B cell (primary cell): ENCODE measurements at regions of chr2 and their contacts with region 1.

Region 1: DNA sequence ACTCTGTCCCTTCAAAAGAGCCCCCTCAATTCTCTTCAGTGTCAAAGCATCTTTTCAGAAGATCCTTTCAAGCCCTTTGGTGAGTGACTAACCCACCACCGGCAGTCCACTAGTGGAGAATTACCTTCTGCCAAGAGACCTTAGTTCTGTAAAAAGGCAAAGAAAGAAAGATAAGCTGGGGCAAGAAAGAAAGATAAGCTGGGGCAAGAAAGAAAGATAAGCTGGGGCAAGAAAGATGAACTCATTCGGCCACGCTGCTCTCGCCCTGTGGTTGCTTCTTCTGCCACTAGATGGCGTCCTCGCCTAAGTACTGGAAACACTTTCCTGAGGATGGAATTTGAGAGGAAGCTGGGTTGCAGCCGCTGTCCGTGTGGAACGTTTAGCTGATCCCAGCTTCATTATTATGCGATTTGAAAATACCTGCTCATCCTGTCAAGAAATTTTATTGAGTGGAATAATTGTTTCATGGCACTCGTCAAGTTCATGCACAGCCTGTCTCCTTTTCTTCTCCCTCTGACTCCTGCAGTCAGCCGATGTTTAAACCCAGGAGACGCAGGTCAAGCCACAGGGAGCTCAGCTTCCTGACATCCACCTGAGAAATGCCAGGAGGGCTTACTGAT is 17.3 kb upstream of the ANXA4 start:
- DNase-seq: peak; percentile 86
- ATAC-seq: peak; percentile 74
- H3K4me3 ChIP-seq: peak overlapping the region in 4 of 5 experiments; percentile 27 to 44 (median 31)
- H3K4me3 Mint-ChIP-seq: peak overlapping the region; percentile 64
- H3K27ac ChIP-seq: no peak overlapping the region
- H3K27ac Mint-ChIP-seq: no peak overlapping the region
- H3K4me1 ChIP-seq: peaks cover 3 to 7% of the 10 kb centered on the region in 2 donors
- H3K4me1 Mint-ChIP-seq: peaks cover 7% of the 10 kb centered on the region
- H3K27me3 ChIP-seq: no peaks in the 10 kb centered on the region
- H3K27me3 Mint-ChIP-seq: peaks cover 6% of the 10 kb centered on the region
- CTCF ChIP-seq: peak; percentile 100

Region 2: GRCh38 chr2:69693061-69693774 is 31.4 kb before region 1 on chr2:
- CTCF ChIA-PET with region 1: interaction called, 16 read pairs
- POLR2A ChIA-PET with region 1: no interaction called
- intact Hi-C with region 1: no loop called
- DNase-seq: peak; percentile 81
- ATAC-seq: peak; percentile 97
- H3K4me3 ChIP-seq: peak overlapping the region in 2 of 5 experiments; percentile 16 to 45
- H3K4me3 Mint-ChIP-seq: peak overlapping the region; percentile 68
- H3K27ac ChIP-seq: peak overlapping the region in 1 of 2 donors; percentile 73
- H3K27ac Mint-ChIP-seq: peak overlapping the region; percentile 2
- H3K4me1 ChIP-seq: peaks cover 29 to 30% of the 10 kb centered on the region in 2 donors
- H3K4me1 Mint-ChIP-seq: peaks cover 35% of the 10 kb centered on the region
- H3K27me3 ChIP-seq: peaks cover 0 to 47% (median 27%) of the 10 kb centered on the region in 4 experiments
- H3K27me3 Mint-ChIP-seq: peaks cover 47% of the 10 kb centered on the region
- CTCF ChIP-seq: no peak

Region 3: GRCh38 chr2:69755862-69756467 is 31.3 kb after region 1 on chr2:
- CTCF ChIA-PET with region 1: interaction called, 12 read pairs
- POLR2A ChIA-PET with region 1: interaction called, 3 read pairs
- intact Hi-C with region 1: no loop called
- DNase-seq: no peak
- ATAC-seq: no peak
- H3K4me3 ChIP-seq: no peak overlapping the region
- H3K4me3 Mint-ChIP-seq: no peak overlapping the region
- H3K27ac ChIP-seq: no peak overlapping the region
- H3K27ac Mint-ChIP-seq: no peak overlapping the region
- H3K4me1 ChIP-seq: no peaks in the 10 kb centered on the region
- H3K4me1 Mint-ChIP-seq: peaks cover 12% of the 10 kb centered on the region
- H3K27me3 ChIP-seq: no peaks in the 10 kb centered on the region
- H3K27me3 Mint-ChIP-seq: no peaks in the 10 kb centered on the region
- CTCF ChIP-seq: no peak

Region 4: DNA sequence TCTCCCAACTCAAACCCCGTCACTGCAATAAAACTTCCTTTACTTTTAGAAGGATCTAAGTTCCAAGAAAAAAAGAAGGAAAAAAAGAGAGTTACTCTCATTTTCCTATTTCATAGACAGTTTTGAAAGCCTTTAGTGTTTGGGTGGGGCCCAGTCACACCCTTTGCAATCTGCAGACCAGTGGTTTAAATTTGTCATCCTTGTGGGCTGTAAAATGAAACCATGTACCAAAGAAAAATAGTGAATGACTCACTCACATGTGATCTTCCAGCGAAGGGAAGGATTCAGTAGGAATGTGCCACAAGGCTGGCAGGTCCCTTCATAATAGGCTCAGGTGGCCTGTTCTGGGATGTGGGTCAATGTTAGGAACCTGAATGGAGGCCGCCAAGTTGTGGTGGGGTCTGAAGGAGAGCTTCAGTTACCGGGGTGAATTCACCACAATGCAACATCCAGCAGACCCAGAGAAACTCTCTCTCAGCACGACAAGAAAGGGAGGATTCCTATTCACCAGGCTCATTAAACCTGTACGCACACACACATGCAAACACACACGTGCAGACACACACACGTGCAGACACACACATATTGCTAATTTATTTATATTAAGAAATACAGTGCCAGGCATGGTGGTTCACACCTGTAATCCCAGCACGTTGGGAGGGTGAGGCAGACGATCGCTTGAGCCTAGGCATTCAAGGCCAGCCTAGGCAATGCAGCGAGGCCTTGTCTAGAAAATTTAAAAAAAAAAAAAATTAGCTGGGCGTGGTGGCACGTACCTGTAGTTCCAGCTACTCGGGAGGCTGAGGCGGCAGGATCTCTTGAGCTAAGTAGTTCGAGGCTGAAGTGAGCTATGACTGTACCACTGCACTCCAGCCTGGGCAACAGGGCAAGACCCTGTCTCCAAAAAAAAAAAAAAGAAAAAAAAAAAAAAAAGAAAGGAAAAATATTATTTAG is 45.8 kb after region 1 on chr2:
- CTCF ChIA-PET with region 1: interaction called, 17 read pairs
- POLR2A ChIA-PET with region 1: no interaction called
- intact Hi-C with region 1: no loop called
- DNase-seq: no peak
- ATAC-seq: no peak
- H3K4me3 ChIP-seq: no peak overlapping the region
- H3K4me3 Mint-ChIP-seq: peak overlapping the region; percentile 8
- H3K27ac ChIP-seq: no peak overlapping the region
- H3K27ac Mint-ChIP-seq: peak overlapping the region; percentile 21
- H3K4me1 ChIP-seq: peaks cover 58 to 61% of the 10 kb centered on the region in 2 donors
- H3K4me1 Mint-ChIP-seq: peaks cover 58% of the 10 kb centered on the region
- H3K27me3 ChIP-seq: no peaks in the 10 kb centered on the region
- H3K27me3 Mint-ChIP-seq: no peaks in the 10 kb centered on the region
- CTCF ChIP-seq: no peak

Region 5: DNA sequence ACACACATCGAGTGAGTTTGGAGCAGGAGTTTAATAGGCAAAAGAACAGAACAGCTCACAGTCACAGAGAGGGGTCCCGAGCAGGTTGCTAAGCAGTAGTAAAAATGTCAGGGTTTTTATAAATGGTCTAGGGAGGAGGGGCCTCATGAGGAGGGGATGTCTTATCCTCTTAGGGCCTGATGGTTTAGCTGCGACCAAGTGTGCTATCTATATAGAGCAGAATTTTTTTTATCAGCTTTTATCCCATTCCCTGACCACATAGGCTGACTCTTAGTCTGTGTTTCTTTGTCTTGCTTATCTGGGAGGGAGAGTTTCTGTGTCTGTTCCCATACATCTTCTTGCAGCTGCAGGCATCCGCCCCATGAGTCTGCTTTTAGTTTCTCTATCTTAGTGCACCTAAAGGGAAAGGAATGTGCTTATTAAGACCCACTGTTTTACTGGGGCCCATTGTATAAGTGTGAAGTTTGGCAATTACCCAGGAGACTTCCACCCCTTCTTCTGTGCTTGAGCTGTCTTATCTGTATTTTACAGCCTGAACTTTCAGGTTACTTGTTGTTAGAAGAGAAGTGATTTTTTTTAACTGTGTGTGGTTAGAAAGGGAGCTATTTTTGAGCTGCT is 74.4 kb after region 1 on chr2:
- CTCF ChIA-PET with region 1: interaction called, 76 read pairs
- POLR2A ChIA-PET with region 1: interaction called, 3 read pairs
- intact Hi-C with region 1: no loop called
- DNase-seq: peak; percentile 35
- ATAC-seq: peak; percentile 46
- H3K4me3 ChIP-seq: peak overlapping the region in 4 of 5 experiments; percentile 11 to 42 (median 38)
- H3K4me3 Mint-ChIP-seq: peak overlapping the region; percentile 88
- H3K27ac ChIP-seq: peak overlapping the region; percentile 42 to 71
- H3K27ac Mint-ChIP-seq: peak overlapping the region; percentile 81
- H3K4me1 ChIP-seq: peaks cover 58 to 70% of the 10 kb centered on the region in 2 donors
- H3K4me1 Mint-ChIP-seq: peaks cover 60% of the 10 kb centered on the region
- H3K27me3 ChIP-seq: no peaks in the 10 kb centered on the region
- H3K27me3 Mint-ChIP-seq: no peaks in the 10 kb centered on the region
- CTCF ChIP-seq: no peak

Region 6: GRCh38 chr2:69816923-69817542 is 92.4 kb after region 1 on chr2:
- CTCF ChIA-PET with region 1: interaction called, 440 read pairs
- POLR2A ChIA-PET with region 1: interaction called, 5 read pairs
- intact Hi-C with region 1: loop called (anchors 1 kb)
- DNase-seq: peak; percentile 87
- ATAC-seq: peak; percentile 88
- H3K4me3 ChIP-seq: no peak overlapping the region
- H3K4me3 Mint-ChIP-seq: no peak overlapping the region
- H3K27ac ChIP-seq: no peak overlapping the region
- H3K27ac Mint-ChIP-seq: no peak overlapping the region
- H3K4me1 ChIP-seq: peaks cover 0 to 6% of the 10 kb centered on the region in 2 donors
- H3K4me1 Mint-ChIP-seq: peaks cover 3% of the 10 kb centered on the region
- H3K27me3 ChIP-seq: no peaks in the 10 kb centered on the region
- H3K27me3 Mint-ChIP-seq: no peaks in the 10 kb centered on the region
- CTCF ChIP-seq: peak; percentile 92

Region 7: DNA sequence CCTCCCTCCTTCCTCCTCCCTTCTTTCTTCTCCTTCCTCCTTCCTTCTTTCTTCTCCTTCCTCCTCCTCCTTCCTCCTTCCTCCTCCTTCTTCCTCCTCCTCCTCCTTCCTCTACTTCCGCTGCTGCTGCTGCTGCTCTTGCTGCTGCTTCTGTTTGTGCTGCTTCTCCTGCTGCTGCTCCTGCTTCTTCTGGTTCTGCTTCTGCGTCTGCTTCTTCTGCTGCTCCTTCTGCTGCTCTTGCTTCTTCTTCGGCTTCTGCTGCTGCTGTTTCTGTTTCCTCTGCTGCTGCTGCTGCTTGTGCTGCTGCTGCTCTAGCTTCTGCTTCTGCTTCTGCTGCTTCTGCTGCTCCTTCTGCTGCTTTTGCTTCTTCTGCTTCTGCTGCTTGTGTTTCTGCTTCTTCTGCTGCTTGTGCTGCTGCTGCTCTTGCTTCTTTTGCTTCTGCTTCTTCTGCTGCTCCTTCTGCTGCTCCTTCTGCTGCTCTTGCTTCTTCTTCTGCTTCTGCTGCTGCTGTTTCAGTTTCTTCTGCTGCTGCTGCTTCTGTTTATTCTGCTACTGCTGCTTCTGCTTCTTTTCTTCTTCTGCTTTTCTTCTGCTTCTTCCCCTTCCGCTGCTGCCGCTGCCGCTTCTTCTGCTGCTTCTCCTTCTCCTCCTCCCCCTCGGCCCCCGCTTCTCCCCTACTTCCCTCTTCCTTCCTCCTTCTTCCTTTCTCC is 177.7 kb after region 1 on chr2:
- CTCF ChIA-PET with region 1: interaction called, 3 read pairs
- POLR2A ChIA-PET with region 1: interaction called, 4 read pairs
- intact Hi-C with region 1: loop called (anchors 2 kb)
- DNase-seq: peak; percentile 86
- ATAC-seq: peak; percentile 83
- H3K4me3 ChIP-seq: peak overlapping the region; percentile 16 to 55 (median 47)
- H3K4me3 Mint-ChIP-seq: peak overlapping the region; percentile 71
- H3K27ac ChIP-seq: peak overlapping the region; percentile 72 to 74
- H3K27ac Mint-ChIP-seq: peak overlapping the region; percentile 89
- H3K4me1 ChIP-seq: peaks cover 27 to 29% of the 10 kb centered on the region in 2 donors
- H3K4me1 Mint-ChIP-seq: peaks cover 36% of the 10 kb centered on the region
- H3K27me3 ChIP-seq: no peaks in the 10 kb centered on the region
- H3K27me3 Mint-ChIP-seq: no peaks in the 10 kb centered on the region
- CTCF ChIP-seq: no peak